Prostate gland (tissue), 2 donors: ENCODE measurements at regions of chr17 and their contacts with region 1.

Region 1: GRCh38 chr17:17313350-17313991 is 10.3 kb downstream of the NT5M start:
- DNase-seq: peak; percentile 60
- H3K4me3 ChIP-seq: no peak overlapping the region
- H3K27ac ChIP-seq: no peak overlapping the region
- H3K4me1 ChIP-seq: no peaks in the 10 kb centered on the region
- H3K27me3 ChIP-seq: no peaks in the 10 kb centered on the region
- CTCF ChIP-seq: peak in 3 of 4 experiments; percentile 36 to 73 (median 66)
- POLR2A ChIP-seq: no peak

Region 2: DNA sequence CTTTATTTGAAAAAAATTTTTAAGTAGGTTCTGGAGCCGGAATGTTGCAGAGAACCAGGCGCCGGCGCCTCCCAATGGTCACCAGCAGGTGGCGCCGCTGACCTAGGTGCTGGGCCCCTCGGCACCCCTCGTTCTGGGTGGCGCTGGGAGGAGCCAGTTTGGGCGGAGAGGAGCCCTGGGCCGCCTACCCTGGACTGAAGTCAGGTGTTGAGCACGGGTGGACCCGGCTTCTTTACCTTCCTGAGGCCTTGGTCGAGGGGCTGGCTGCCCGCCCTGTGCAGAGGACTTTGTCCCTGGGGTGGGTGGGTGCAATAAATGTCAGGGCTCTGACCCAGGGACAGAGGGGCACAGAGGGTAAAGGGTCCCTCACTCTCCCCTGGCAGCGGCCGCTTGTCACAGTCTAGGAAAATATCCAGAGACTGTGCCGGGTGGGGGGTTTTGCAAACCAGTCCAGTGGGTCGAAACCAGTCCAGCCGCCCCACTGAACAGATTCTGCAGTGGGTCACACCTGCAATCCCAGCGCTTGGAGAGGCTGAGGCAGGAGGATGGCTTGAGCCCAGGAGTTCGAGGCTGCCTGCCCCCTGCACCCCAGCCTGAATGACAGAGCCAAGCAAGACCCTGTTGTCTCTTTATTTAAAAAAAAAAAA is 311.5 kb before region 1 on chr17:
- intact Hi-C with region 1: loop called (anchors 5 kb)
- DNase-seq: peak; percentile 75
- H3K4me3 ChIP-seq: no peak overlapping the region
- H3K27ac ChIP-seq: no peak overlapping the region
- H3K4me1 ChIP-seq: no peaks in the 10 kb centered on the region
- H3K27me3 ChIP-seq: no peaks in the 10 kb centered on the region
- CTCF ChIP-seq: peak; percentile 94 to 95 (median 95)
- POLR2A ChIP-seq: no peak

Region 3: GRCh38 chr17:17420561-17421269 is 107.2 kb after region 1 on chr17:
- intact Hi-C with region 1: no loop called
- DNase-seq: no peak
- H3K4me3 ChIP-seq: no peak overlapping the region
- H3K27ac ChIP-seq: no peak overlapping the region
- H3K4me1 ChIP-seq: peaks cover 3% of the 10 kb centered on the region
- H3K27me3 ChIP-seq: no peaks in the 10 kb centered on the region
- CTCF ChIP-seq: no peak
- POLR2A ChIP-seq: no peak